Right ventricle myocardium superior (tissue), 1 donor: ENCODE measurements at regions of chr18 and their contacts with region 1.

Region 1: DNA sequence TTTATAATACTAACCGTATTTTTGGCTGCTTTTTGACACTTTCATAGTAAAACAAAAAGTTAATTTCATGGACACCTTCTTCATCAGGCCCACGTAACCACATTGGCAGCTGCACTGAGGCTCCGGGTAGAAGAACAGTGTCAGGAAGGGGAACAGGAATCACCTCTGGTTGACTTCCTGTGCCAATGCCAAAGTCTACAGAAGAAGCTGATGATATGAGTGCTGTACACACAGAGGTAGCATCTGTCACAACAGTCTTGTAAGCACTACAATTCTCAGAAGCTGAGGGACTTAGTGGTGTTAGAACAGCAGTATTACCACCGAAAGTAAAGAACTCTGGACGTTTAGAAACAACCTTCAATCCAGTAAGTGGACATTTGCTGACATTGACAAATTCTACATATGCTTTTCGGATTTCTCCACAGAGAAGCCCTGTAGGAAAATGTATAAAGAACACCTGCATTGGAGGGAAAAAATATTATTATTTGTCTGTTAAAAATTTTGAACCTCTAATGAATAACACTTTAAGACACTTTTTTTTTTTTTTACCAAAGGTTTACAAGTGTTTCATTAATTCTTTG is 85.3 kb downstream of the TRAPPC8 start:
- DNase-seq: no peak
- ATAC-seq: no peak

Region 2: DNA sequence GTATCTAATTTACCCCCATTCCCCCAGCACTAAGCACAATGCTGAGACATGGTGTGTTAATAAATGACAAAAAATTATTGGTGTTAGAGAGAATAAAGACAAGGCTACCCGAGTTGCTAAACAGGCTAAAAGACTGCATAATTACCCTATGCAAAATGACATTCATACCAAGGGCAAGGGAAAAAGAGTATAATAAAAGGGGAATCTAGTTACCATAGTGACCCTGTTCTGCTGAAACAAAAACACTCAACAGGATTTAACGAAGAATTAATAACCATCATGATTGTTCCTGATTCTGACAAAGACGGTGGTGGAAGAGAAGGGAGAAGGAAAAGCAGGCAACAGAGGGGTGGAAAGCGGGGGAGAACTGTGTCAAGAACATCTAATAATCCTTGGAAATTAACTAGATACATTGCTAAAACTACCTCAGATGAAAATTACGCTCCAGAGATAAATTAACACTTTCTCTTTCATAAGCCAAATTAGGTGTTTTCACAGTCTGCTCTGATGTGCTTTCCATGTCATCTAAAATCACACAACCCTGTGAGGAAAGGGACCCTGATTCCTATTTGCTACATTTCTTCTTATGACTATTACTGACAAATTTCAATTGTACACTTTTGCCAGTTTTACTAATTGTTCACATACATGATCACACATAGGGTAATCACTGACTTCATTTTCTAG is 240.4 kb before region 1 on chr18:
- intact Hi-C with region 1: no loop called
- DNase-seq: no peak
- ATAC-seq: no peak

Region 3: GRCh38 chr18:31901063-31901462 is 43.4 kb after region 1 on chr18:
- intact Hi-C with region 1: loop called (anchors 10 kb)
- DNase-seq: no peak
- ATAC-seq: no peak